Lower leg skin (tissue), 4 donors: ENCODE measurements at regions of chr2 and their contacts with region 1.

Region 1: GRCh38 chr2:36973320-36973719 is 7.0 kb upstream of the STRN start:
- DNase-seq: no peak
- H3K4me3 ChIP-seq: no peak overlapping the region
- CTCF ChIP-seq: no peak
- POLR2A ChIP-seq: no peak

Region 2: DNA sequence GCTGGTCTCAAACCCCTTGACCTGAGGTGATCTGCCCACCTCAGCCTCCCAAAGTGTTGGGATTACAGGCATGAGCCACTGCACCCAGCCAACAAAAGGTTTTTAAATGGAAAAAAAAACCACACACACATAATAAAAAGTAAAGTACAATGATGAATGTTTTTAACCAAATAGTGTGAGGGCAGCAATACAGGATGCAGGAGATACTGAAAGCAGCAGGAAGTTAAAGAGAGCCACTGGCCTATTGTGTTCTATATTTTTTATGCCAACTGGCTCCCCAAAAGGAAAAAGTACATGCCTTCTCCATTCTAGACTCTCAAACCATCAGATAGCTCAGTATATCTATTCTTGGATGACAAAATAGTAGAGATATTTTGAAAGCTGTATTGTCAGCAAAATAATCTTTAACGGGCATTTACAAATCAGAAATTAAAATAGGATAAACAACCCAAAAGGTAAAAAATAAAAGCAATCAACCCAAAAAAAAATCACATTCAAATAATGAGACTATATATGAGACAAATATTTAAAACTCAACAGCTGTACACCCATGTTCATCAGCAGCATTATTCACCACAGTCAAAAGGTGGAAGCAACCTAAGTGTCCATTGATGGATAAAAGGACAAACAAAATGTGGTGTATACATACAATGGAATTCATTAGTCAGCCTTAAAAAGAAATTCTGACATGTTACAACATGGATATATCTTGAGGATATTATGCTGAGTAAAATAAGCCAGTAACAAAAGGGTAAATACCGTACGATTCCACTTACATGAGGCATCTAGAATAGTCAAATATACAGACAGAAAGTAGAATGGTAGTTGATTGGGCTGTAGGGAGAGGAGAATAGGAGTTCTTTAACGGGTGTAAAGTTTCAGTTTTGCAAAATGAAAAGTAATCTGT is 137.2 kb after region 1 on chr2:
- intact Hi-C with region 1: no loop called
- DNase-seq: no peak
- H3K4me3 ChIP-seq: no peak overlapping the region
- CTCF ChIP-seq: no peak
- POLR2A ChIP-seq: no peak

Region 3: DNA sequence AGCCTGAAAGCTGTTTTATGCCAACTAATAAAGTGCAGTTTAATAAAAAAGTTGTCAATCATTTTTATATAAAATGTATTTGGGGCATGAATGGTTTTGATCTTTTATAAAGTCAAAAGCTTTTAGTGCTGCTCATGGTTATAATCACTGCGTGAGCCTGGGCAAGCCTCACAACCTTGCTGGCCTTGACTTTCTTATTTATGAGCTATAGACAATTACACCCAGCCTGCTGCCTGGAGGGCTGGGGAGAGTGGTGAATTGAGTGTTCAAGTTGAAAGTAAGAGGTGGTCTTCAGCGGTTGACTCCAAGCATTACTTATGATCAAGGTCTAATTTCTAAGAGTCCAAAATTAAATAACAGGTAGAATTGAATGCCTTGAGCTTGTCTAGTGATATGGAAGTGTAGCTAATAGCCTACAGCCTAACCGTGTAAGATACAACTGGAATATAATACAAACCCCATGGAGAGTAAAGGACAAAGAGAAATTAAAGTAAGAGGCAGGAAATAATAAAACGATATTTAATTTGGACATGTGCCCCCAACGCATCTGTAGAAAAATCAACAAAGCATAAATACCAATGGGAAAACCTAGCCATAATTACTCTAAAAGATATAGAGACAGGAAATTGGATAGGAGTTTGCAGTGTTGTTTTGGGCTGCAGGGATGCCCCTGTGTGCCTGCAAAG is 1208.6 kb after region 1 on chr2:
- intact Hi-C with region 1: loop called (anchors 5 kb)
- DNase-seq: no peak
- H3K4me3 ChIP-seq: no peak overlapping the region
- CTCF ChIP-seq: no peak
- POLR2A ChIP-seq: no peak